SK-N-SH (cell line): ENCODE measurements at regions of chr10 and their contacts with region 1.

Region 1: DNA sequence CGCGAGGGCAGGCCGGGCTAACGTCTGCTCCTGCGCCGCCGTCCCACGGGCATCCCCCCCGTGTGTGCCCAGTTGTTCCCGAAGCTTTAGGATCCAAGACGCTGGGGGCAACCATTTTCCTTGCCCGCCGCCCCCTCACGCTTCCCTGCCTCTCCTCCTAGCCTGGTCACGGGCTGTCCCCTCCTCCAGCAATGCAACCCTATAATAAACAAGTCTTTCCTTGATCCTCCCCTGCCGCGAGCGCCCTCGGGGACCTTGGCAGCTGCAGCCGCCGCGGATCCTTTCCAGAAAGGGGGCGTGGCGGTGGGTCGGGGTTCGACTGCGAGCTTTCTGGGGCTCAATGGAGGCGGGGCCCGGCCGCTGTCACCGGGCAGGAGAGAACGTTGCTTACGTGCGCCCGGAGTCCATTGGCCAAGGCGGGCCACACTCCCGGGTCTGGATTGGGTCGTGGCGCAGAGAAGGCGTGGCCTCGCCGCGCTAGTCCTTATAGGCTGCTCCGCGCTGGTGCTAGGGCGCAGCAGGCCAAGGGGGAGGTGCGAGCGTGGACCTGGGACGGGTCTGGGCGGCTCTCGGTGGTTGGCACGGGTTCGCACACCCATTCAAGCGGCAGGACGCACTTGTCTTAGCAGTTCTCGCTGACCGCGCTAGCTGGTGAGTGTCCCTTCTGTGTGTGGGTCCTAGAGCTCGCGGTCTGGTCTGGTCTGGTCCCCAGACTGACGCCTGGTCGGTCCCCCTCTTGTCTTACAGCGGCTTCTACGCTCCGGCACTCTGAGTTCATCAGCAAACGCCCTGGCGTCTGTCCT is at the start of gene DDIT4:
- DNase-seq: peak; percentile 99
- H3K4me3 ChIP-seq: peak within 1 kb of the TSS; percentile 82 to 98
- H3K27ac ChIP-seq: peak within 1 kb of the TSS; percentile 78 to 100
- H3K4me1 ChIP-seq: peaks cover 20 to 36% of the 10 kb centered on the region in 2 experiments; a peak in 3 of 4 replicates
- H3K27me3 ChIP-seq: no peaks in the 10 kb centered on the region
- CTCF ChIP-seq: no peak
- EP300 ChIP-seq: peak; percentile 43 to 80; a peak in 2 of 4 replicates
- RAD21 ChIP-seq: peak; percentile 35
- polyA plus RNA-seq, gene DDIT4: 24.9 and 30.4 TPM in 2 replicates

Region 2: GRCh38 chr10:72218325-72218724 is 55.3 kb before region 1 on chr10:
- CTCF ChIA-PET with region 1: interaction called, 16 read pairs
- POLR2A ChIA-PET with region 1: interaction called, 9 read pairs
- DNase-seq: no peak
- H3K4me3 ChIP-seq: no peak overlapping the region
- H3K27ac ChIP-seq: no peak overlapping the region
- H3K4me1 ChIP-seq: peaks cover 7 to 11% of the 10 kb centered on the region in 2 experiments; a peak in 2 of 4 replicates
- H3K27me3 ChIP-seq: no peaks in the 10 kb centered on the region
- CTCF ChIP-seq: no peak
- EP300 ChIP-seq: no peak
- RAD21 ChIP-seq: no peak

Region 3: GRCh38 chr10:72260588-72261322 is 12.9 kb before region 1 on chr10:
- CTCF ChIA-PET with region 1: interaction called, 70 read pairs
- POLR2A ChIA-PET with region 1: interaction called, 174 read pairs
- DNase-seq: peak; percentile 95
- H3K4me3 ChIP-seq: peak overlapping the region; percentile 52 to 64
- H3K27ac ChIP-seq: peak overlapping the region; percentile 41 to 96; a peak in 3 of 4 replicates
- H3K4me1 ChIP-seq: peaks cover 20 to 28% of the 10 kb centered on the region in 2 experiments
- H3K27me3 ChIP-seq: no peaks in the 10 kb centered on the region
- CTCF ChIP-seq: no peak; the same call in 1 of the 2 replicates
- EP300 ChIP-seq: no peak
- RAD21 ChIP-seq: no peak

Region 4: DNA sequence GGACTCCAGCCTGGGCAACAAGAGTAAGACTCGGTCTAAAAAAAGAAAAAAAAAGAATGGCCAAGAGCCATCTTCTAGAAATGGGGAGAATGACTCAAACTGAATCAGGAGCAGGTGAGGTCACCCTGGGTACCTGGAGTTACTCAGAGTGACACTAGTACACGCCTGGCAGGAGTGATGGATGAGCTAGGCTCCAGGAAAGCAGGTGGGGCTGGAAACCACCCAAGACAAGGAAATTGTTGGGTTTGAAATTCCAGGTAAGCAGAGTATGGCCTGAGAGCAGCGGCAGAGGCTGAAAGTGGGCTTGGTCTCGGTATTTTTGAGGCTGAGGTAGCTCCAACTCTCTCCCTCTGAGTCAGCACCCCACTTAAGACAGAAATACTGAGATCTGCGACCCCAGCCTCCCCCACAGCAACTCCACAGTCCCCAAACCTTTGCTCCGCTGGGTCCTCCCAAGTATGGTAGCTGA is 18.6 kb after region 1 on chr10:
- CTCF ChIA-PET with region 1: interaction called, 26 read pairs
- POLR2A ChIA-PET with region 1: interaction called, 22 read pairs
- DNase-seq: no peak
- H3K4me3 ChIP-seq: no peak overlapping the region
- H3K27ac ChIP-seq: no peak overlapping the region
- H3K4me1 ChIP-seq: peaks cover 0 to 3% of the 10 kb centered on the region in 2 experiments; a peak in 2 of 4 replicates
- H3K27me3 ChIP-seq: no peaks in the 10 kb centered on the region
- CTCF ChIP-seq: no peak
- EP300 ChIP-seq: peak in 1 of 2 experiments; percentile 43; a peak in 1 of 4 replicates
- RAD21 ChIP-seq: no peak

Region 5: GRCh38 chr10:72308320-72308987 is 34.8 kb after region 1 on chr10:
- CTCF ChIA-PET with region 1: interaction called, 10 read pairs
- POLR2A ChIA-PET with region 1: interaction called, 188 read pairs
- DNase-seq: peak; percentile 78
- H3K4me3 ChIP-seq: no peak overlapping the region
- H3K27ac ChIP-seq: peak overlapping the region; percentile 41 to 78
- H3K4me1 ChIP-seq: peaks cover 9 to 29% of the 10 kb centered on the region in 2 experiments; a peak in 2 of 4 replicates
- H3K27me3 ChIP-seq: no peaks in the 10 kb centered on the region
- CTCF ChIP-seq: no peak
- EP300 ChIP-seq: no peak
- RAD21 ChIP-seq: no peak

Region 6: DNA sequence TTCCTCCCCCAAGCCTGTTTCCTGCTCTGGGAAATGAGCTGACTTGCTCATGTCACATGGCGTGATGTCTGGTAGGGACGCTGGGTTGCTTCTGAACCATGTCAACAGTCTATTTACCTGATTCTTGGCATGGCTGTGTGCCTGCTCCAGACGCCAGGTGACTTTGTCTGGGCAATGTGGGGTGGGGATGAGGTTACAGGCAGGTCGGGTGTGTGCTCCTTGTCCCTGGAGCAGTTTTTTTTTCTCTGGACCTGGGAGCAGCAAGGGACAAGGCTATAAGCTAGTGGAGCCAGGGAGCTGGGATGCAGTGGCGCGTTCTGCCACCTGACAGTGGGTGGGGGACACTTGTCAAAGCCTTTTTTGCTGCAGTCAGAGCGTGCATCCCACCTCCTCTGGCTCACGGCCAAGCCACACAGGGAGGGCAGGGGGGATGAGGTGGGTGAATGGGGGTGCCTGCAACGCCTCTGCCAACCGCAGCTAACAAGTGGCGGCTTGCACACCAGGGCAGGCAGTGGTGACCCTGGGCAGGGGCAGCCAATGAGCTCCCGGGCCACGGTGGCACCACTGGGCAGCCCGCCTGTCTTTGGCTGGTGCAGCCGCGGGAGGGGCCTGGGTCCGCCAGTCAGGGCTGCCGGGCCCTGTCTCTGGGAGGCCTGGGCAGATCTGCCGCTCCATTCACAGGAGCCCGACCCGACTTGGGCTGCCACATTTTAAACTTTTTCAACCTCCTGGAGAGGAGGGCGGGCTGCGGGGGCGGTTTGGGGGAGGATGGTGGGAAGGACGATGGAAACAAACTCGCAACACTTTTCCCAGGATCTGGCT is 58.2 kb after region 1 on chr10:
- CTCF ChIA-PET with region 1: interaction called, 198 read pairs
- POLR2A ChIA-PET with region 1: interaction called, 234 read pairs
- DNase-seq: peak; percentile 94
- H3K4me3 ChIP-seq: no peak overlapping the region; a peak in 1 of 4 replicates
- H3K27ac ChIP-seq: peak overlapping the region; percentile 28 to 99; a peak in 3 of 4 replicates
- H3K4me1 ChIP-seq: peaks cover 16 to 86% of the 10 kb centered on the region in 2 experiments
- H3K27me3 ChIP-seq: no peaks in the 10 kb centered on the region
- CTCF ChIP-seq: 0 out of 2 replicates have a peak, but pooled peaks have one; percentile 20
- EP300 ChIP-seq: peak; percentile 37 to 84; a peak in 2 of 4 replicates
- RAD21 ChIP-seq: peak; percentile 27

Region 7: DNA sequence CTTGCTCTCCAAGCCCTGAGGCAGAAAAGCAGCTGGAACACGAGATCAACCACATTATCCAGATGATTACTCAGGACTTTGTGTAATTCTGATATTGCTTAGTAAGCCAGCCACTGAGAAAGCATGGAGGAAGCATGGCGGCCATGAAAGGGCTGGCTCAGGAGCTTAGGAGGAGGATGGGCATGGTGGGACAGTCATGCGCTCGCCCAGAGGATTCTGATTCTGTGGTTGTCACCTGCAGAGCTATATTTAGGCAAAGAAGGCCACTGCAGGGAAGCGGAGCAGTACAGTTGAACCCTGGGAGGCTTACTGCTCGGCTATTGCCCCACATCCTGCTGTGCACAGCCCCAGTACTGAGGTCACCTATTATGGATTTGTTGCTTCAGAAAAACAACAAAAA is 209.9 kb after region 1 on chr10:
- CTCF ChIA-PET with region 1: no interaction called
- POLR2A ChIA-PET with region 1: no interaction called
- DNase-seq: no peak
- H3K4me3 ChIP-seq: no peak overlapping the region
- H3K27ac ChIP-seq: no peak overlapping the region
- H3K4me1 ChIP-seq: no peaks in the 10 kb centered on the region
- H3K27me3 ChIP-seq: no peaks in the 10 kb centered on the region
- CTCF ChIP-seq: no peak
- EP300 ChIP-seq: no peak
- RAD21 ChIP-seq: no peak